ENCODE measurements at regions of chr12 and their contacts with region 1.

Region 1: DNA sequence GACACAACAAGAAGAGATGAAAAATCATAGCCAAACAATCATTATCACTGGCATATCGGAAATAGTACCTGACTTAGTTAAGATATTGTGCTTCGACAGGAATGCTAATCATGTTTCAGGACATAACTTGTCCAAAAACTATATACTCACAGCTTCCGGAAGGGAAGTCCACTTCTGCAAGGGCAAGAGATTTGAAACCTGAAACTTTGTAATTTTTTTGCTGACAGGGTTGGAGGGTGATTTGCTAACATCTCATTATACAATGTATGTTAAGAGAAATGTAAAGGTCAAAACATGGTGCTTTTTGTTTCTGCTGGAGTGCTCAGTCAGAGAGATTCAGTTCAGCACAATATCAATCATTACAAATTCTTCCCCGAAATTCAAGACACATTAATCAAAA is 200.3 kb downstream of the CNTN1 start:
- ATAC-seq: no peak
- H3K4me3 ChIP-seq: no peak overlapping the region
- H3K27ac ChIP-seq: no peak overlapping the region
- H3K4me1 ChIP-seq: no peaks in the 10 kb centered on the region

Region 2: GRCh38 chr12:40473962-40474361 is 418.6 kb before region 1 on chr12:
- in situ Hi-C with region 1: loop called in 1 of 9 experiments (anchors 25 kb)
- ATAC-seq: peak in 6 of 8 experiments; percentile 45 to 88 (median 64)
- H3K4me3 ChIP-seq: no peak overlapping the region
- H3K27ac ChIP-seq: no peak overlapping the region
- H3K4me1 ChIP-seq: peaks cover 0 to 3% of the 10 kb centered on the region in 2 donors

Region 3: GRCh38 chr12:41019461-41019860 is 126.9 kb after region 1 on chr12:
- in situ Hi-C with region 1: no loop called
- ATAC-seq: no peak
- H3K4me3 ChIP-seq: no peak overlapping the region
- H3K27ac ChIP-seq: no peak overlapping the region
- H3K4me1 ChIP-seq: no peaks in the 10 kb centered on the region